ENCODE measurements at regions of chr2 and their contacts with region 1.

Region 1: GRCh38 chr2:160674146-160674750 is 180.6 kb upstream of the RBMS1 start:
- DNase-seq: no peak
- ATAC-seq: peak in 1 of 2 donors; percentile 55

Region 2: DNA sequence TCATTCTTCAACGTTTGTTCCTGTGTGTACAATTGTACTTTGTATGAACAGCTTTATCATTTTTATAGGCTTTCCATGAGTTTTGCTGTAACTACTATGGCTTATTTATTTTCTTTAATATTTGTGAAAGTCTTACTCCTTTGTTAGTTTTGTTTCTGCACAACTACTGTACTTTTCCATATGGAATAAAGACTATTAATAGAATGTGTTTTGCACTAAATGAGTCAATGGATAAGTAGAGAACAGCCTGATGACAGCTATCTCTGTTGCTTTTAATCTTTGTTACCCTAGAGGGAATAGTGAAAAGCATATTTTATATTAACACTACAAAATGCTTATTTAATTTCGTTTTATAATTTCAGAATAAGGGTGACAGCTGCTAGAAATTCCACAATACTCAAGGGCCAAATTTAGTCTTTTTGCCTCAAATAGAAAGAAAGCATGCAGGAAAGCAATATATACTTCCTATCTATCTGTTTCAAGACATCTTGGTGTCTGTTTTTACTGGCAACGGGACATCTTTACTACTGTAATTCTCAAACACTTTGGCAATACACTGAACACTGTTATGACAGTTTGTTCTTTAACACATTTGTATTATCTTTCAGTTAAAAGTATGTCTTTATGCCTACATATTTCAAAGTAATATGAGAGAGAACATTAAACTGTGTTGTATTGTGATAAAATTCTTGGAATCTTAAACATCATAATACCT is 1441.6 kb before region 1 on chr2:
- intact Hi-C with region 1: no loop called
- DNase-seq: no peak
- ATAC-seq: peak in 1 of 2 donors; percentile 28

Region 3: GRCh38 chr2:160166002-160166401 is 508.2 kb before region 1 on chr2:
- intact Hi-C with region 1: no loop called
- DNase-seq: no peak
- ATAC-seq: no peak

Region 4: DNA sequence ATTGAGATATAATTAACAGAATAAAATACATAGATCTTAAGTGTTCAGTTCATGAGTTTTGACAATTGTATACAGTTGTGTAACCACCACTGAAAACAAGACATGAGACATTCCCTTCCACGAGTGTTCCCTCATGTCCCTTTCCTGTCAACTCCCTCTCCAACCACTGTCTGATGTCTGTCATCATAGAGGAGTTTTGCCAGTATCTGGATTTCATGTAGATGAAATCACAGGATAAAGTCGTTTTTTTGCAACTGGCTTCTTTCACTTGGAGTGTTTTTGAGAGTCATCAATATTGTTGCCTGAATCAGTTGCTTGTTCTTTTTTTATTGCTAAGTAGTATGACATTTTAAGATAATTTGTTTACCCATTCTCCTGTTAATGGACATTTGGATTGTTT is 233.4 kb before region 1 on chr2:
- intact Hi-C with region 1: loop called in 1 of 2 experiments (anchors 10 kb)
- DNase-seq: no peak
- ATAC-seq: no peak